Activated CD4-positive, alpha-beta memory T cell treated with anti-CD3 and anti-CD28 coated beads, Interleukin-2, amount 10 ng/mL, durations not matched to agents 7 days and 5 days (primary cell): ENCODE measurements at regions of chr1 and their contacts with region 1.

Region 1: DNA sequence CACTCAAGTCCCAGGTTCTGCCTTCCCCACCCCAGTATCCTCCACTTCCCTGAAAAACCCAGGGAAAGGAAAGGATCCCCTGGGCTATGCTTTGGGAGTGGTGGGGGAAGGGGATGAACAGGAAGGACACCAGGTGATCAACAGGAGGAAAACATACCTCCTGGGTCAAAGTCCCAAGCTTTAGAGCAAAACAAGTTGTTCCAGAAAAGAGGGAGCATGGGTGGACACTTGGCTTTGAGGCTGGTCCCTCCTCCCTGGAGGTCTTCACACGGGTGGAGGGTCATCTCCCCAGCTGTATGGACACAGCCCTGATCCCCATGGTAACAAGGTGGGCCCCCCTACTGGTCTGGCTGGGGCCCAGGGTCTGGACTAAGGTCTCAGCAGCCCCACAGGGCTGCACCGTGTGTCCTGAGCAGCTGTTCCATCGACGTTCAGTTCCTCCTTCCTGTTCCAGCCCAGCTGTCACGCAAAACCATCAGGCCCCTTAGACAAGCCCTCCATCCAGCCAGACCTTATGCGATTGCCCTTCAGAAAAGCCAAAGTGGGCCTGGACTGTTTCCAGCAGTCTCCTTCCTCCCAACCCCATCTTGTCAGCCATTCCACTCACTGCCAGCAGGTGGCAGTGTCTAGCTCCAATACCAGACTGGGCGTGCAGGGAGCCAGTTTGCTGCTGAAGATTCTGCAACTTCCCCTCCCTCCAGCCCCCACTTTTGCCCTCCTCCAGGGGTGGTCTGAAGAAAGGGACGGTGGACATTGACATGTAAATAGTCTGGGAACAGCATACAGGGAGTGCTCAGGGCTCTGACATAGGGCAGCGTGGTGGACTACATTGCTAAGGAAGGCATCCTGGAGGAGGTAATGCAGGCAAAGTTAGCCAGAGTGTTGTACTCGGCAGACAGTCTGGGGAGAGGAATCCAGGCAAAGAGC is 2.9 kb upstream of the PDZK1IP1 start:
- DNase-seq: peak; percentile 75
- H3K4me3 Mint-ChIP-seq: no peak overlapping the region
- H3K27ac Mint-ChIP-seq: no peak overlapping the region
- H3K4me1 Mint-ChIP-seq: no peaks in the 10 kb centered on the region
- H3K27me3 Mint-ChIP-seq: peaks cover 8% of the 10 kb centered on the region

Region 2: GRCh38 chr1:47179017-47179987 is 13.4 kb before region 1 on chr1:
- CTCF ChIA-PET with region 1: interaction called, 36 read pairs
- POLR2A ChIA-PET with region 1: interaction called, 4 read pairs
- DNase-seq: peak; percentile 86
- H3K4me3 Mint-ChIP-seq: peak overlapping the region; percentile 74
- H3K27ac Mint-ChIP-seq: peak overlapping the region; percentile 41
- H3K4me1 Mint-ChIP-seq: peaks cover 8% of the 10 kb centered on the region
- H3K27me3 Mint-ChIP-seq: peaks cover 19% of the 10 kb centered on the region

Region 3: DNA sequence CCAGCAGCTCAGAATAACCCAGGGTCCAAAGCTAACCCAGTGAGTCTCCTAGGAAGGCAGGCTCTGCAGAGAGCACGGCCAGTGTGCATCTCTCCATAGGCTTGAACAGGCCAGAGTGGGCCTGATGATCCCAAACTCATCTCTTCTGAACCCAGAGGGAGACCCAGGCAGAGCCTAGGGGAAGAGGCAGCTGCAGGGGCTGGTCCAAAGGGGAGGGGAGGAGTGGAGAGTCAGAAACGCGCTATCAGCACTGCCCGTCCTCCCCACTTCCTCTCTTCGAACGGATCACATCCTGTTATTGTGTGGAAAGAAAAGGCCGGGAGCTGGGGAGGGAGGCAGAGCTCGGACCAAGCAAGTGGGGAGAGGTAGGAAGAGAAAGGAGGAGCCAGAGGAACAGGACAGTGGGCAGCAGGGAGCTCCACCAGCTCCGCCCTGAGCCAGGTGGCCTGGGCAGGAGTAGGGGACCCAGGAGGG is 19.1 kb after region 1 on chr1:
- CTCF ChIA-PET with region 1: interaction called, 18 read pairs
- POLR2A ChIA-PET with region 1: no interaction called
- DNase-seq: no peak
- H3K4me3 Mint-ChIP-seq: no peak overlapping the region
- H3K27ac Mint-ChIP-seq: no peak overlapping the region
- H3K4me1 Mint-ChIP-seq: peaks cover 14% of the 10 kb centered on the region
- H3K27me3 Mint-ChIP-seq: peaks cover 4% of the 10 kb centered on the region

Region 4: GRCh38 chr1:47219590-47220220 is 27.0 kb after region 1 on chr1:
- CTCF ChIA-PET with region 1: interaction called, 11 read pairs
- POLR2A ChIA-PET with region 1: no interaction called
- DNase-seq: no peak
- H3K4me3 Mint-ChIP-seq: no peak overlapping the region
- H3K27ac Mint-ChIP-seq: no peak overlapping the region
- H3K4me1 Mint-ChIP-seq: no peaks in the 10 kb centered on the region
- H3K27me3 Mint-ChIP-seq: no peaks in the 10 kb centered on the region

Region 5: GRCh38 chr1:47252369-47252768 is 59.6 kb after region 1 on chr1:
- CTCF ChIA-PET with region 1: interaction called, 10 read pairs
- POLR2A ChIA-PET with region 1: no interaction called
- DNase-seq: no peak
- H3K4me3 Mint-ChIP-seq: no peak overlapping the region
- H3K27ac Mint-ChIP-seq: no peak overlapping the region
- H3K4me1 Mint-ChIP-seq: no peaks in the 10 kb centered on the region
- H3K27me3 Mint-ChIP-seq: no peaks in the 10 kb centered on the region